ENCODE measurements at regions of chr1 and their contacts with region 1.

Region 1: DNA sequence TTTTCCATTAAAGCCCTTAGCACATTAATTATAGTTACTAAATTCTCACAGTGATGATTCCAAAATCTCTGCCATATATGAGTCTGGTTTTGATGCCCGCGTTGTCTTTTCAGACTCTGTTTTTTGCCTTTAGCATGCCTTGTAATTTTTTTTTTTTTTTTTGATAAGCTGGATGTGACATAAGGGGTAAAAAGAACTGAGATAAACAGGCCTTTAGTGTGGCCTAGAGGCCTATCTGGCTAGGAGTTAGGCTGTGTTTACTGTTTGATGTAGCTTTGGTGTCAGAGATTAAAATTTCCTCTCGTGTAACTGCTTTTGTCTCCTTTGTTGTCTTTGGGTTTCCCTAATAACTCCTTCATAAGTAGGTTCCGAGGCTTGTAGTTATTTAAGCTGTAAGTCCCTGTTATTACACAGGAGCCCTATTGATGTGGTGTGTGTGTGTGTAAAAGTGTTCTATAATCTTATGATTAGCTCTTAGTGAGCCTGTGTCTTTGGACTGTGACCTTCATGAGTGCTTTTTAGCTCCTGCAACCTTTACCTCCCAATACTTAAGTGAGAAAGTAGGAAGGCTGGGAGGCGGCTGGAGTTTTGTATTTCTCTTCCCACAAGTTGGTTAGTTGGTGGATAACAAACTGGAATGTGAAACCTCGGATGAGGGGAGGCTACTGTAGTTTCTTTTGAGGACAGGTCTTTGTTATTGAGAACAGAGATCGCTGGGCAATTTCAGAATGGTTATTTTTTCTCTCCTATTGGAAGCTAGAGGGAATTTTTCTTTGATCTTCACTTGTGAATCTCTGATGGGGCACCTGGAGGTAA is 19.3 kb downstream of the HS2ST1 start:
- H3K4me3 ChIP-seq: no peak overlapping the region
- H3K27ac ChIP-seq: no peak overlapping the region
- H3K4me1 ChIP-seq: peaks cover 2% of the 10 kb centered on the region; the same call in 1 of the 2 replicates
- CTCF ChIP-seq: no peak

Region 2: DNA sequence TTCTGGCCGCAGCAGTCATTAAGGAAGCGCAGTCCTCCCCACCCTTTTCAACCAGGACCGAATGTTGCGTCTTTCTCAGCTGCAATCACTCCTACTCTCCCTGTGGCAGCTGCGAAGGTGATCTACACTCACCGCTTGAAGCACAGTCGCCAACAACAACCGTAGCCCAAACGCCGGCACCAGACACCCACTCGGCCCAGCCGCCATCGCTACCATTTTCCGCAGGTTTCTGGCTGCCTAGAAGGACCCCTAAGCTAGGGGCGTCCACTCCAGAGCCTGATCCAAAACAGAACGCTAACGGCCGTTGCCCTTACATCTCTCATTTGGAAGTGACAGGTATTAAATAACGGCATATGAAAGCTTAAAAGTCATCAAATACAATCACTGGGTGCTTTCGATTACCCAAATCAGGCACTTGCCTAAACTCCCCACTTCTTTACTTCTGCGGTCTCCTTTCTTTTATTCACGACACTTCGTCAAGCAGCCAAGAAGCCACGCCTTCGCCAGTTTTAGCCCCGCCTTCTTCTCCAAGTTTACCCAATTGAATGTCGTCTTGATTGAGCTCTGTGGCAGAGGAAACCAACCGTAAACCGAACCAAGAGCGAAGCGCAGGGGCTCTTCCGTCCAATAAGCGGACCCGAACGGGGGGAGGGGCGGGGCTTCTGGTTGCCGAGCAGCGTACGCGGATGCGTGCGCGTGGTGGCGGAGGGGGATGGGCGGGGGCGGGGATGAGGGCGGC is 19.7 kb before region 1 on chr1 and contains the start of gene SELENOF:
- CTCF ChIA-PET with region 1: interaction called, 5 read pairs
- POLR2A ChIA-PET with region 1: interaction called, 10 read pairs
- H3K4me3 ChIP-seq: peak within 1 kb of the TSS; percentile 94
- H3K27ac ChIP-seq: peak within 1 kb of the TSS; percentile 76
- H3K4me1 ChIP-seq: no peaks in the 10 kb centered on the region; the same call in 1 of the 2 replicates
- CTCF ChIP-seq: no peak